SK-N-SH (cell line): ENCODE measurements at regions of chr9 and their contacts with region 1.

Region 1: GRCh38 chr9:128117613-128118471 is 9.7 kb downstream of the PTGES2 start:
- DNase-seq: peak; percentile 91
- H3K4me3 ChIP-seq: peak overlapping the region in 1 of 2 experiments; percentile 42; a peak in 1 of 4 replicates
- H3K27ac ChIP-seq: no peak overlapping the region
- H3K4me1 ChIP-seq: peaks cover 4 to 7% of the 10 kb centered on the region in 2 experiments; a peak in 1 of 4 replicates
- H3K27me3 ChIP-seq: no peaks in the 10 kb centered on the region
- CTCF ChIP-seq: peak; percentile 100
- EP300 ChIP-seq: no peak
- RAD21 ChIP-seq: peak; percentile 92

Region 2: GRCh38 chr9:127805620-127806019 is 312.2 kb before region 1 on chr9:
- CTCF ChIA-PET with region 1: no interaction called
- POLR2A ChIA-PET with region 1: no interaction called
- DNase-seq: peak; percentile 62
- H3K4me3 ChIP-seq: no peak overlapping the region
- H3K27ac ChIP-seq: no peak overlapping the region
- H3K4me1 ChIP-seq: peaks cover 13 to 16% of the 10 kb centered on the region in 2 experiments; a peak in 3 of 4 replicates
- H3K27me3 ChIP-seq: no peaks in the 10 kb centered on the region
- CTCF ChIP-seq: peak; percentile 59
- EP300 ChIP-seq: no peak
- RAD21 ChIP-seq: no peak

Region 3: DNA sequence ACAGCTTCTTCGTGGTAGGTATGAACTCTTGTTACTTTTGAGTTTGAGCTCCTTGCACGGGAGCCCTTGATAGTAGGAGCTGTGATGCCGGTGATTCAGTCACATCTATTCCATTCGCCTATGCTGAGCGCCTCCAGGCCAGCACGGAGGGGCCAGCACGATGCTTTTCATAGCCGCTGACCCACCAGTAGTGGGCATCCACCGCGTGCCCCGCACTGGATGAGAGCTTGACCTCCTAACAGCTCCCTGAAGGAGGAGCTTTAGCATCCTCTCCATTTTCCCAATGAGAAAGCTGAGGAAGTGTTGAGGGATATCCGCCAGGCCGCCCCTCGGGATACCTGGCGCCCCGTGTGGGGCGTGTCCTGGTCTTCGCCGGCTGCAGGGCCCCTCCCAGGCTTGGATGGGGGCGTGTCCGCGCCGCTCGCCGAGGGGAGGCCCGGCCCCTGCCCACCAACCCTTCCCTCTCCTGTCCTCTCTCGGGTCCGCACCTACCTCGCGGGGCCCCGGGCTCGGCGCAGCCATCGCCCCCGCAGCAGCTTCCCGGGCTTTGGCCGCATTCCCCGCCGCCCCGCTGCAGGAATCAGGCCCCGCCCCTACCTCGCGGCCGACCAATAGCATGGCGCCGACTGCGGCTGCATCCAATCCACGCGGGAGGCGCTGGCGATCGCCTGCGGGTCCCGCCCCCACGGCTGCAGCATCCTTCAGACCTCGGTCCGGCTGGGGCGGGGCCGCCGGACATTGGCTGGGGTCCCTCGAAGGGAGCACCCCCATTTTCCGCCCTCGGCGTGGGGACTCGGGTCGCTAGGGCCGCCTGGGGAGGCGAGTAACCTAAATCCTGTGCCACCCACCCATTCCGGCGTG is 187.4 kb before region 1 on chr9 and contains the start of gene PIP5KL1:
- CTCF ChIA-PET with region 1: interaction called, 12 read pairs
- POLR2A ChIA-PET with region 1: no interaction called
- DNase-seq: peak; percentile 98
- H3K4me3 ChIP-seq: peak within 1 kb of the TSS; percentile 59 to 64
- H3K27ac ChIP-seq: peak within 1 kb of the TSS; percentile 80 to 91
- H3K4me1 ChIP-seq: peaks cover 7 to 31% of the 10 kb centered on the region in 2 experiments; a peak in 3 of 4 replicates
- H3K27me3 ChIP-seq: no peaks in the 10 kb centered on the region
- CTCF ChIP-seq: peak; percentile 40
- EP300 ChIP-seq: no peak
- RAD21 ChIP-seq: no peak
- polyA plus RNA-seq, gene PIP5KL1: 4.0 and 6.1 TPM in 2 replicates

Region 4: DNA sequence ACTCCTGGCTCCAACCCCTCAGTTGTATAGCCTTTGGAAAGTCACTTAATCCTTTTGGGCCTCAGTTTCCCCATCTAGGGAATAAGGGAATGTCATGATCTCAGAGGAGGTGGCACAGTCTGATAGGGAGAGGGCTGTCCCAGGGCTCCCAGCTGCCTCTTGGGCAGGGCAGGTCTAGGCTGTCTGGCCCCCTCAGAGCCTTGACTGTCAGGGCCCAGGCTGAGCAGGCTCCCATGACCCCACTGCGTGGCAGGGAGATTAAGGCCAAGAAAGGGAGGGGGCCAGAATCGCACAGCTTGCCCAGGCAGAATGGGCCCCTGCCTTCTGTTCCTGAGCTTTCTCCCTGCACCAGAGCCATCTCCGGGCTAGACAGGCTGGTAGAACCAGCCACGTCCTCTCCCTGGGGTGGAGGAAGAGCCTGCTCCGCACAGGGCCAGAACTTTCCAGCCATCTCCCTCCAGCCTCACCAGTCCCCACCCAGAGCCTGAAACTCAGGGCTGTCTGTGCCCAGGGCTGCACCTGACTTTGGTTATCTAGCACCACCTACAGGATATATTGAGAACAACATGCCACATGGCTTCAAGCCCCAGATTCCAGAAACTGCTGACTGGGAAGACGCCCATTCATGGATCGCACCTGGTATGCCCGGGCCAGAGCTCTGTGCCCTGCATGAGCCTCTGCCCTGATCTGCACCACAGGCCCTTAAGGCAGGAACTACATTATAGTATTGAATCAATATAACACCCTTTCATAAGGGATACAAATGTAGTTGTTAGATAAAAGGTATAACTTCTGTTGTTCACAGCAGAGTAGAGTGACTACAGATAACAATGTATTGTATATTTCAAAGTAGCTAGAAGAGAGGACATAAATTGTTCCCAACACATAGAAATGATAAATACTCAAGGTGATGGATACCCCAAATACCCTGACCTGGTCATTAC is 82.7 kb before region 1 on chr9:
- CTCF ChIA-PET with region 1: interaction called, 20 read pairs
- POLR2A ChIA-PET with region 1: no interaction called
- DNase-seq: peak; percentile 82
- H3K4me3 ChIP-seq: no peak overlapping the region; a peak in 1 of 4 replicates
- H3K27ac ChIP-seq: no peak overlapping the region; a peak in 1 of 4 replicates
- H3K4me1 ChIP-seq: no peaks in the 10 kb centered on the region; a peak in 1 of 4 replicates
- H3K27me3 ChIP-seq: no peaks in the 10 kb centered on the region
- CTCF ChIP-seq: peak; percentile 72
- EP300 ChIP-seq: no peak
- RAD21 ChIP-seq: peak; percentile 96

Region 5: DNA sequence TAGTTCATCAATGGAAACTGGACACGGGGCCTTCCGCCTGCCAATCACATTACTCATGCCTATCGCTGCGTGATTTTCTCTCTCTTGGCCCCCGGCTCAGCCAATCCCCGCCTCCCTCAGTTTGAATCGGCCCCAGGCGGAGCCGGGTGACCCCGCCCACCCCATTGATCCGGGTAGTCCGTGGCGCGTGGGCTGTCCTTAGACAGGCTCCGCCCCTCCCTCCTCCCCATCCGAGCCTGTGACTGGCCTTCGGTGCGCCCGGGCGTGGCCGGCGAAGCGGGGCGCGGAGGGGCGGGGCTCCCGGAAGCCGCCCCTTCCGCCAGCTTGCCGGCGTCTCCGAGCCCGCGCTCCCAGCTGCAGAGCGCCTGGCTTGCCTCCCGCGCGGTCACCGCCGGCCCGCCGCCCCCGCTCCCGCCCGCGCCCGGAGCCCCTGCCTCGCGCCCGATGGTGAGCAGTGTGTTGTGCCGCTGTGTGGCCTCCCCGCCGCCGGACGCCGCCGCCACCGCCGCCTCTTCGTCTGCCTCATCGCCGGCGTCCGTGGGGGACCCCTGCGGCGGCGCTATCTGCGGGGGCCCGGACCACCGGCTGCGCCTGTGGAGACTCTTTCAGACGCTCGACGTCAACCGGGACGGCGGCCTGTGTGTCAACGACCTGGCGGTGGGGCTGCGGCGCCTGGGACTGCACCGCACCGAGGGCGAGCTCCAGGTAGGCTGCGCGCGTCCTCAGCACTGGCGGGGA is 49.8 kb before region 1 on chr9 and contains the start of gene SLC25A25:
- CTCF ChIA-PET with region 1: interaction called, 23 read pairs
- POLR2A ChIA-PET with region 1: no interaction called
- DNase-seq: peak; percentile 99
- H3K4me3 ChIP-seq: peak within 1 kb of the TSS; percentile 81 to 84
- H3K27ac ChIP-seq: peak within 1 kb of the TSS; percentile 99
- H3K4me1 ChIP-seq: peaks cover 22 to 27% of the 10 kb centered on the region in 2 experiments
- H3K27me3 ChIP-seq: no peaks in the 10 kb centered on the region
- CTCF ChIP-seq: no peak
- EP300 ChIP-seq: no peak
- RAD21 ChIP-seq: no peak
- polyA plus RNA-seq, gene SLC25A25: 12.1 and 12.3 TPM in 2 replicates

Region 6: GRCh38 chr9:128127990-128128835 is 10.4 kb after region 1 on chr9:
- CTCF ChIA-PET with region 1: interaction called, 82 read pairs
- POLR2A ChIA-PET with region 1: interaction called, 3 read pairs
- DNase-seq: peak; percentile 94
- H3K4me3 ChIP-seq: peak overlapping the region; percentile 94 to 96
- H3K27ac ChIP-seq: peak overlapping the region; percentile 91 to 97
- H3K4me1 ChIP-seq: peaks cover 0 to 27% of the 10 kb centered on the region in 2 experiments; a peak in 1 of 4 replicates
- H3K27me3 ChIP-seq: no peaks in the 10 kb centered on the region
- CTCF ChIP-seq: no peak
- EP300 ChIP-seq: peak in 1 of 2 experiments; percentile 15; a peak in 1 of 4 replicates
- RAD21 ChIP-seq: no peak

Region 7: DNA sequence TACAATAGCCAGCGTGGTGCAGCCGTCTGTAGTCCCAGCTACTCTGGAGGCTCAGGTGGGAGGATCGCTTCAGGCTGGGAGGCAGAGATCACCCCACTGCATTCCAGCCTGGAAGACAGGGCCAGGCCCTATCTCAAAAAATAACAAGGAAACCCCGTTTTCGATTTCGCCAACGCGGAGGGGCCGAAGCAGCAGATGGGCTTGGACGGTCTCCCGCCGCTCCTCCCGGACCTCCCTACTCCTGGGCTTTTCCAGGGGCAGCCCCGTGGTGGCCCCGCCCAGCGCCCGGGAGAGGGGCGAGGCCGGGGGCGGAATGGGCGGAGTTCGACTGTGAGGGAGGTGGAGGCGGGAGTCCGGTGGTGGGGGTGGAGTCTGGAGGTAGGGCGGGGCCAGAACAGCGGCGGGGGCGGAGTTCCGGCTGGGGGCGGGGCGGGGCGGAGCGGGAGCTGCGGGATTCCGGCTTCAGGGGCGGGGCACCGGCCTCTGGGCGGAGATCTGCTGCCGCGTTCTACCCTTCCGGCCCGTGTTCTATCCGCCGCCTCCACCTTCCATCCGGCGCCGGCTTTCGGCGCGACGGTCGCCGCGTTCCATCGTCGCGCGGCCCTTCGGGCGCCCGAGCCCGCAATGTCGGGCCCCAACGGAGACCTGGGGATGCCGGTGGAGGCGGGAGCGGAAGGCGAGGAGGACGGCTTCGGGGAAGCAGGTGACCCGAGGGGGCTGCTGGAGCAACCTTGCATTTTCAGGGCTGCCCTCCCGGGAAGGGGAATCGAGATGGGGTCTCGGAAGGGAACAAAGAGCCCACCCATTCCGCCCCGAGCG is 42.2 kb after region 1 on chr9 and contains the start of gene BBLN:
- CTCF ChIA-PET with region 1: interaction called, 27 read pairs
- POLR2A ChIA-PET with region 1: no interaction called
- DNase-seq: peak; percentile 100
- H3K4me3 ChIP-seq: peak within 1 kb of the TSS; percentile 73 to 93
- H3K27ac ChIP-seq: peak within 1 kb of the TSS; percentile 39 to 81; a peak in 3 of 4 replicates
- H3K4me1 ChIP-seq: peaks cover 0 to 12% of the 10 kb centered on the region in 2 experiments; a peak in 2 of 4 replicates
- H3K27me3 ChIP-seq: no peaks in the 10 kb centered on the region
- CTCF ChIP-seq: no peak
- EP300 ChIP-seq: no peak
- RAD21 ChIP-seq: no peak
- polyA plus RNA-seq, gene BBLN: 79.4 and 109 TPM in 2 replicates

Region 8: GRCh38 chr9:128203024-128203706 is 85.3 kb after region 1 on chr9 and contains the start of gene DNM1:
- CTCF ChIA-PET with region 1: no interaction called
- POLR2A ChIA-PET with region 1: no interaction called
- DNase-seq: peak; percentile 99
- H3K4me3 ChIP-seq: peak within 1 kb of the TSS; percentile 64 to 76
- H3K27ac ChIP-seq: peak within 1 kb of the TSS; percentile 48 to 84; a peak in 3 of 4 replicates
- H3K4me1 ChIP-seq: peaks cover 0 to 20% of the 10 kb centered on the region in 2 experiments; a peak in 1 of 4 replicates
- H3K27me3 ChIP-seq: no peaks in the 10 kb centered on the region
- CTCF ChIP-seq: peak; percentile 63
- EP300 ChIP-seq: no peak
- RAD21 ChIP-seq: peak; percentile 20; the same call in 1 of the 2 replicates
- polyA plus RNA-seq, gene DNM1: 31.0 and 35.7 TPM in 2 replicates

Region 9: DNA sequence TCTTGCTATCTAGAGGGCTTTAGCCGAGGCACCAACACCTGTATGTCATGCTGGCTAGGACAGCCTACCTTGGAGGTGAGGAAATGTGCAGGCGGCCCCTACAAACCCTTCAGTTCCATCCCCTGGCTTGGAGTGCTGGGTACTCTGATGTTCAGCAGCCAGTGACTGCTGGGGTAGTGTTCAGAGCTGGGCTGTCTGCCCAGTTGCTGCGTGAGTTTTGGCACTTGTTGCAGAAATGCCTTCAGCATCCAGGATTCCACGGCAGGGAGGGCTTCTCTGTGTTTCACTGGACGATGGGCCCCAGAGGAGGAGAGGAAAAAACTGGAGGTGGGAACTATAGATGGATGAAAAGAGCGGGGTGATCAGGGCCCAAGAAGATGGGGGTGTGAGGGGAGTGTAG is 168.6 kb after region 1 on chr9:
- CTCF ChIA-PET with region 1: no interaction called
- POLR2A ChIA-PET with region 1: no interaction called
- DNase-seq: no peak
- H3K4me3 ChIP-seq: no peak overlapping the region
- H3K27ac ChIP-seq: no peak overlapping the region
- H3K4me1 ChIP-seq: no peaks in the 10 kb centered on the region
- H3K27me3 ChIP-seq: no peaks in the 10 kb centered on the region
- CTCF ChIP-seq: no peak
- EP300 ChIP-seq: no peak
- RAD21 ChIP-seq: no peak

Region 10: DNA sequence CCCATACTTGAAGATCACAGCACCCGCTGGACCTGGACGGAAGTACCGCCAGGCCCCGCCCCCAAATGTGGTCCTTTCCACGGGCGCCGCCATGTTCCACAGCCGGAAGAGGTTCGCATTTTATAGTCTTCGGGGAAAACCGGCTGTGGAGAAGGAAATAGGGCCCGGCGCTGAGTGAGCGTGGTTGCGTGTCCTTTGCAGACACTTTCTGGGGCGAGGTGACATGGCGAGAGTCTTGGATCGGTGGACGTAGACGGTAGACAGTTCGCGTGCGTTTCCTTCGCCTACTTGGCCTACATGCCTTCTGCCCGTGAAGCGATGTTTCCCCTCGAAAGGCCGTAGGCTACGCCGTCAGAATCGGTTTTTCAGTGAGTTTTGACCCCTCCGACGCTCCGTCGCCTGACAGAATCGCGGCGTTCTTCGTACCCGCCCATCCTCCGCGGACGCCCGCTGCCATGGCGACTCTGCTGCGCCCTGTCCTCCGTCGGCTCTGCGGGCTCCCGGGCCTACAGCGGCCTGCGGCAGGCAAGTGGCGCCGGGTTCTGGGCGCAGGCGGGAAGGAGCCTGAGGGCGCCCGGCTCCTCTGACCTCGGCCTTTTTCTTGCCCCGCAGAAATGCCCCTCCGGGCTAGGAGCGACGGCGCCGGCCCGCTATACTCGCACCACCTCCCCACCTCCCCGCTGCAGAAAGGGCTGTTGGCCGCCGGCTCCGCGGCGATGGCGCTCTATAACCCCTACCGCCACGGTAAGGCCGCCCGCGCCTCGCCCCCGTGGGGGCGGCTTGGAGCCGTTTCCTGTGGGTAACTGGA is 204.8 kb after region 1 on chr9 and contains the starts of genes COQ4 and TRUB2:
- CTCF ChIA-PET with region 1: no interaction called
- POLR2A ChIA-PET with region 1: no interaction called
- DNase-seq: peak; percentile 95
- H3K4me3 ChIP-seq: peak within 1 kb of the TSS; percentile 75 to 96
- H3K27ac ChIP-seq: peak within 1 kb of the TSS; percentile 87 to 95
- H3K4me1 ChIP-seq: peaks cover 11% of the 10 kb centered on the region in 2 experiments; a peak in 3 of 4 replicates
- H3K27me3 ChIP-seq: no peaks in the 10 kb centered on the region
- CTCF ChIP-seq: peak; percentile 16
- EP300 ChIP-seq: no peak
- RAD21 ChIP-seq: no peak
- polyA plus RNA-seq, gene COQ4: 54.7 and 57.2 TPM in 2 replicates
- polyA plus RNA-seq, gene TRUB2: 18.8 and 23.3 TPM in 2 replicates